ENCODE measurements at regions of chr7 and their contacts with region 1.

Region 1: DNA sequence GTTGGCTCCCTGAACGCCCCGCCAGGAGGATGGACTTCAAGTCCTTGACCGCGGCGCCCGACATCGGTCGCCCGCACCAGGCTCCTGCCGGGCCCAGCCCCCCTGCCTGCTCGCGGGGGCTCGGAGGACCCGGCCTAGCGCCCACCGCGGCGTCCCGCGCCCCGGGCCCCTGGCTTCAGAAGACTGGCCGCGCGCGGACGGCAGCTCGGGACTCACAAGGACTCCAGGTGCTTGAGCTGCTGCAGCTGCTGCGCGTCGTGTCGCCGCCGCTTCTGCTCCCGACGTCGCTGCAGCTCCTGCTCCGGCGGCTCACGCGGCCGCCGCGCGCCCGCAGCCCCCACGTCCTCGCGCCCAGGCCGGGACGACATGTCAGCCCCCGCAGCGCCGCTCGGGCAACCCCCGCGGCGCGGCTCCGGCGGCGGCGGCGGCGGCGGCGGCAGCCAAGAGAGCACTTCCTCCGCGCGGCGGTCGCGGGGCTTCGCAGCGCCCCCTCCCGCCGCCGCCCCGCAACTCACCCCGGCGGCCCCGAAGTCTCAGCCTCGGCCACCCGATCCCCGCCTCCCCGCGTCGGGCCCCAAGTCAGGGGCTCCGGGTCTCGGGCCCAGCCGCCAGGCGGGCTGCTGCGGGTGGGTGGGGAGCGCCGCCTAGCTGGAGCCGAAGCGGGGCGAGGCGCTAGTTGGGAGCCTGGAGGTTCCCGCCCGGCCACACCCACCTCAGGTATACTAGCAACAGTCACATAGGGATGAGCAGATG is at the start of gene RP9:
- DNase-seq: peak; percentile 87
- ATAC-seq: peak; percentile 93
- H3K4me3 Mint-ChIP-seq: peak within 1 kb of the TSS; percentile 88
- H3K27ac Mint-ChIP-seq: peak within 1 kb of the TSS; percentile 76
- H3K4me1 Mint-ChIP-seq: peaks cover 32% of the 10 kb centered on the region
- H3K27me3 Mint-ChIP-seq: peaks cover 5% of the 10 kb centered on the region
- total RNA-seq, gene RP9: 17.2 to 19.2 TPM

Region 2: GRCh38 chr7:32761451-32762205 is 347.6 kb before region 1 on chr7:
- CTCF ChIA-PET with region 1: interaction called, 5 read pairs
- POLR2A ChIA-PET with region 1: no interaction called
- intact Hi-C with region 1: loop called (anchors 1 to 2 kb)
- DNase-seq: peak; percentile 11
- ATAC-seq: no peak
- H3K4me3 Mint-ChIP-seq: no peak overlapping the region
- H3K27ac Mint-ChIP-seq: no peak overlapping the region
- H3K4me1 Mint-ChIP-seq: peaks cover 9% of the 10 kb centered on the region
- H3K27me3 Mint-ChIP-seq: peaks cover 43% of the 10 kb centered on the region

Region 3: GRCh38 chr7:32891800-32892520 is 217.2 kb before region 1 on chr7:
- CTCF ChIA-PET with region 1: interaction called, 6 read pairs
- POLR2A ChIA-PET with region 1: no interaction called
- intact Hi-C with region 1: loop called (anchors 1 kb)
- DNase-seq: peak; percentile 99
- ATAC-seq: peak; percentile 67
- H3K4me3 Mint-ChIP-seq: peak overlapping the region; percentile 94
- H3K27ac Mint-ChIP-seq: peak overlapping the region; percentile 99
- H3K4me1 Mint-ChIP-seq: peaks cover 44% of the 10 kb centered on the region
- H3K27me3 Mint-ChIP-seq: no peaks in the 10 kb centered on the region

Region 4: GRCh38 chr7:33040803-33041516 is 68.2 kb before region 1 on chr7:
- CTCF ChIA-PET with region 1: interaction called, 5 read pairs
- POLR2A ChIA-PET with region 1: no interaction called
- intact Hi-C with region 1: loop called in 1 of 2 experiments (anchors 2 kb)
- DNase-seq: peak; percentile 79
- ATAC-seq: peak; percentile 99
- H3K4me3 Mint-ChIP-seq: peak overlapping the region; percentile 66
- H3K27ac Mint-ChIP-seq: peak overlapping the region; percentile 77
- H3K4me1 Mint-ChIP-seq: peaks cover 62% of the 10 kb centered on the region
- H3K27me3 Mint-ChIP-seq: no peaks in the 10 kb centered on the region

Region 5: GRCh38 chr7:33096333-33096732 is 12.8 kb before region 1 on chr7:
- CTCF ChIA-PET with region 1: interaction called, 13 read pairs
- POLR2A ChIA-PET with region 1: no interaction called
- intact Hi-C with region 1: no loop called
- DNase-seq: no peak
- ATAC-seq: no peak
- H3K4me3 Mint-ChIP-seq: no peak overlapping the region
- H3K27ac Mint-ChIP-seq: no peak overlapping the region
- H3K4me1 Mint-ChIP-seq: no peaks in the 10 kb centered on the region
- H3K27me3 Mint-ChIP-seq: no peaks in the 10 kb centered on the region